CD8-positive, alpha-beta T cell (primary cell): ENCODE measurements at regions of chr10 and their contacts with region 1.

Region 1: GRCh38 chr10:95246579-95247051 is 44.2 kb downstream of the PDLIM1 start:
- DNase-seq: peak; percentile 13 to 77 (median 61)
- ATAC-seq: peak; percentile 40
- H3K4me3 ChIP-seq: no peak overlapping the region
- H3K4me3 Mint-ChIP-seq: no peak overlapping the region
- H3K27ac ChIP-seq: no peak overlapping the region
- H3K27ac Mint-ChIP-seq: no peak overlapping the region
- H3K4me1 ChIP-seq: no peaks in the 10 kb centered on the region
- H3K4me1 Mint-ChIP-seq: no peaks in the 10 kb centered on the region
- H3K27me3 ChIP-seq: no peaks in the 10 kb centered on the region
- H3K27me3 Mint-ChIP-seq: peaks cover 15% of the 10 kb centered on the region
- CTCF ChIP-seq: peak; percentile 62

Region 2: GRCh38 chr10:94623572-94623971 is 623.0 kb before region 1 on chr10:
- CTCF ChIA-PET with region 1: no interaction called
- POLR2A ChIA-PET with region 1: no interaction called
- intact Hi-C with region 1: loop called in 1 of 2 experiments (anchors 10 kb)
- DNase-seq: no peak
- ATAC-seq: no peak
- H3K4me3 ChIP-seq: no peak overlapping the region
- H3K4me3 Mint-ChIP-seq: no peak overlapping the region
- H3K27ac ChIP-seq: no peak overlapping the region
- H3K27ac Mint-ChIP-seq: no peak overlapping the region
- H3K4me1 ChIP-seq: no peaks in the 10 kb centered on the region
- H3K4me1 Mint-ChIP-seq: no peaks in the 10 kb centered on the region
- H3K27me3 ChIP-seq: no peaks in the 10 kb centered on the region
- H3K27me3 Mint-ChIP-seq: no peaks in the 10 kb centered on the region
- CTCF ChIP-seq: no peak

Region 3: DNA sequence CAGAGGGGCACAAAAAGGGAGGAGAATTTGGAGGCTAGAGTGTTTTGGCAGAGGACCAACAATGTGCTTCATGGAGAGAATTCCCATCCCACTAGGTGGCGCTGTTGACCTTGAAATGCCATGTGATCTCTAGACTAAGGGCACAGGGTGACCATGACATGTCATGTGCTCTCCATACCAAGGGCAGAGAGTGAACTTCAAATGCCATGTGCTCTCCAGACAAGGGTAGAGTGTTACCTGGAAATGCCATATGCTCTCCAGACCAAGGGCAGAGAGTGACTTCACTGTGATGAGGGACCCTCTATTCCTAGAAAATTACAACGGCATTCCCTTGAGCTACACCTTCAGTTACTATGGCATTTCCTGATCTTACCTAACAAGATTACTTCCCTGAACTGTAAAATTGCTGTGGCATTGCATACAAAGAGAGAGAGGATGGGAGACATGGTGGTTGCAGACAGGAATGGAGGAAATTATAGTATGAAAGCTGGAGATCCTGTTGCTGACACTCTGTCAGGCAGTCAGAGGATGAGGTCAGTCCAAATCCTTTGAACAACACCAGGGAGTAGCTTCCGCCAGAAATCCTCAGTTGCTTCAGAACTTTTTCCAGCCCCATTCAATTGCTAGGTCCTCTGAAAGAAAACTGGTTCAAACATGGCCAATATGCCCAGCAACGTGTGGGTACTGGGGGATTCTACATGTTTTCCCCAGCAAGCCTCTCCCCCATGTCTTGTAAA is 113.4 kb before region 1 on chr10:
- CTCF ChIA-PET with region 1: interaction called, 6 read pairs
- POLR2A ChIA-PET with region 1: no interaction called
- intact Hi-C with region 1: loop called (anchors 5 kb)
- DNase-seq: peak; percentile 21 to 75 (median 59)
- ATAC-seq: no peak
- H3K4me3 ChIP-seq: no peak overlapping the region
- H3K4me3 Mint-ChIP-seq: no peak overlapping the region
- H3K27ac ChIP-seq: no peak overlapping the region
- H3K27ac Mint-ChIP-seq: no peak overlapping the region
- H3K4me1 ChIP-seq: no peaks in the 10 kb centered on the region
- H3K4me1 Mint-ChIP-seq: no peaks in the 10 kb centered on the region
- H3K27me3 ChIP-seq: no peaks in the 10 kb centered on the region
- H3K27me3 Mint-ChIP-seq: no peaks in the 10 kb centered on the region
- CTCF ChIP-seq: peak; percentile 29

Region 4: GRCh38 chr10:95257849-95258248 is 11.2 kb after region 1 on chr10:
- CTCF ChIA-PET with region 1: interaction called, 11 read pairs
- POLR2A ChIA-PET with region 1: no interaction called
- intact Hi-C with region 1: no loop called
- DNase-seq: no peak
- ATAC-seq: no peak
- H3K4me3 ChIP-seq: no peak overlapping the region
- H3K4me3 Mint-ChIP-seq: no peak overlapping the region
- H3K27ac ChIP-seq: no peak overlapping the region
- H3K27ac Mint-ChIP-seq: no peak overlapping the region
- H3K4me1 ChIP-seq: no peaks in the 10 kb centered on the region
- H3K4me1 Mint-ChIP-seq: no peaks in the 10 kb centered on the region
- H3K27me3 ChIP-seq: no peaks in the 10 kb centered on the region
- H3K27me3 Mint-ChIP-seq: no peaks in the 10 kb centered on the region
- CTCF ChIP-seq: no peak

Region 5: DNA sequence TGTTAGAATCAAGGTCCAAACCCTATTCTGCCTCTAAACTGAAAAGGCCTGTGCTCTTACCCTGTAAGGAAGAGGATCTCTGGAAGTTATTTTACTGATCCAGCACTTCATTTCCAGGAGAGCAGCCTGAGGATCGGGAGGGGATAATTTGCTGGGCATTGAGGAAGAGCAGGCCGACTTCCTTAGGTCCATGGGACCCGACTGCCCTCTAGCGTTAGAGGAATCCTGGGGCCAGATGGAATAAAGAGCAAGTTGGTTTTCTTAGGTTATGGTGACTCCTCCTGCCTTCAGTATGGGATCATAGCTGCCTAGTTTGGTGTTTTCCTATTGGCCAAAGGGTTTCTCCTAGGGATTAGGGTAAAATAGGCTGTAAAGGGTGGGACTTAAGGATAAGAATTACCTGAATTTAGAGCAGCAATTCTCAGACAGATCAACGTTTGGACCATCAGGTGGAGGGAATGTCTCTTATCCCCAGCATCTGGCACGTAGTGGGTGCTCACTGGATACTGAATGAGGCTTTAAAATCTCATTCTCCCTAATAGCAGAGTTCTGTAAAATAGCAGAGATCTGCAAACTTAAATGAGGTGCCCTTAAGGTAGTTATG is 354.6 kb after region 1 on chr10:
- CTCF ChIA-PET with region 1: interaction called, 3 read pairs
- POLR2A ChIA-PET with region 1: no interaction called
- intact Hi-C with region 1: loop called in 1 of 2 experiments (anchors 1 kb)
- DNase-seq: peak in 8 of 9 experiments; percentile 13 to 64 (median 33)
- ATAC-seq: no peak
- H3K4me3 ChIP-seq: no peak overlapping the region
- H3K4me3 Mint-ChIP-seq: no peak overlapping the region
- H3K27ac ChIP-seq: no peak overlapping the region
- H3K27ac Mint-ChIP-seq: no peak overlapping the region
- H3K4me1 ChIP-seq: no peaks in the 10 kb centered on the region
- H3K4me1 Mint-ChIP-seq: no peaks in the 10 kb centered on the region
- H3K27me3 ChIP-seq: no peaks in the 10 kb centered on the region
- H3K27me3 Mint-ChIP-seq: no peaks in the 10 kb centered on the region
- CTCF ChIP-seq: peak; percentile 50